HepG2 (cell line): ENCODE measurements at regions of chr1 and their contacts with region 1.

Region 1: DNA sequence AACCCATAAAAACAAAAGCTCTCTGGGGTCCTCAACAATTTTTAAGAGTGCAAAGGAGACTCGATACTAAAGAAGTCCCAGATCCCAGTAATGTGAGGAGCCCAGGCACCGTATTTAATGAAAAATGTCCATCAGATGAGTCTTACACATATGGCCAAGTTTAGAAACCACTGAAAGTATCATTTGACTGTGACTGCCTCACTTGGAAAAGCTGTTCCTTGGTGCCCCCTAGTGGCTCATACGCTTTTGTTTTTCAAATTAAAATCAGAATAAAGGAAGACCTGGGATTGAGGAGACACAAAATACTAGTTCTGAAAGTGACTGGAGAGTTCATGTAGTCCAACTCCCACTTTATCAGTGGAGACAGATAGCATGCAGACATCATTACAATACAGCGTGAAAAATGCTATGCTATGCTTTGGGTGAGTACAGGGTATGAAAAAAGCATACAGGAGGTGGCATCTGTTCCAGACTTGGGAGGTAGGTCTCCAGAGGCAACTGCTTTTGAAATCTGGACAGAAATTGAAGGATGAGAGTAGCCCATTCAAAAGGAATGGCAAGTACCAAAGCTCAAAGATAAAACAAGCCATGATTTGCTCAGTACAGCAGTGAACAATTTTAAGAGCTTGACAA is 33.8 kb downstream of the GDAP2 start:
- DNase-seq: peak; percentile 63
- ATAC-seq: peak; percentile 44; the same call in 2 of the 3 replicates
- H3K4me3 ChIP-seq: no peak overlapping the region
- H3K27ac ChIP-seq: no peak overlapping the region
- H3K4me1 ChIP-seq: no peaks in the 10 kb centered on the region
- H3K27me3 ChIP-seq: no peaks in the 10 kb centered on the region
- CTCF ChIP-seq: peak; percentile 81
- EP300 ChIP-seq: no peak
- POLR2A ChIP-seq: no peak
- RAD21 ChIP-seq: peak; percentile 51

Region 2: GRCh38 chr1:117512743-117513321 is 382.8 kb before region 1 on chr1:
- CTCF ChIA-PET with region 1: interaction called, 12 read pairs
- POLR2A ChIA-PET with region 1: no interaction called
- in situ Hi-C with region 1: no loop called
- intact Hi-C with region 1: loop called (anchors 1 kb)
- DNase-seq: no peak
- ATAC-seq: no peak
- H3K4me3 ChIP-seq: no peak overlapping the region
- H3K27ac ChIP-seq: no peak overlapping the region
- H3K4me1 ChIP-seq: no peaks in the 10 kb centered on the region
- H3K27me3 ChIP-seq: no peaks in the 10 kb centered on the region
- CTCF ChIP-seq: peak; percentile 52
- EP300 ChIP-seq: no peak
- POLR2A ChIP-seq: no peak
- RAD21 ChIP-seq: peak; percentile 28; the same call in 1 of the 2 replicates

Region 3: GRCh38 chr1:117534995-117535467 is 360.6 kb before region 1 on chr1:
- CTCF ChIA-PET with region 1: no interaction called
- POLR2A ChIA-PET with region 1: no interaction called
- in situ Hi-C with region 1: no loop called
- intact Hi-C with region 1: loop called (anchors 1 kb)
- DNase-seq: peak; percentile 31
- ATAC-seq: peak; percentile 89
- H3K4me3 ChIP-seq: no peak overlapping the region
- H3K27ac ChIP-seq: no peak overlapping the region
- H3K4me1 ChIP-seq: peaks cover 5% of the 10 kb centered on the region; the same call in 1 of the 2 replicates
- H3K27me3 ChIP-seq: no peaks in the 10 kb centered on the region
- CTCF ChIP-seq: peak; percentile 71
- EP300 ChIP-seq: no peak
- POLR2A ChIP-seq: no peak
- RAD21 ChIP-seq: no peak; the same call in 1 of the 2 replicates

Region 4: DNA sequence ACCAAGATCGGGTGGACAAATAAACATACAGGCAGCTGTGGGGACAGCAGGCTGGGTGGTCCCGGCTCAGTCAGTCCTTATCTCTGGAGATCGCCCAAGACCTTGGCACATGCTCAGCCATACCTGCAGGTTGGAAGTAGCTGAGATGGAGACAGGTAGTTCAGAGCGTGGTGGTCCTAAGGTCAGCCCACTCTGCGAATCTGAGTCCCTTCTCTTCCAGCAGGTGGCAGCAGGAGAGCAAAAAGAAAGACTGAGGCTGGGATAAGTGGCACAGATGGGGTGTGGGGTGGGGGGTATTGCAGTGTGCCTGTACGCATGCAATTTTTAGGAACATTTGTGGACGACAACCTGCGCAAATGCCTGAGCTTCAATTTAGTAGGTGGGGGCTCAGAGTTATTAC is 184.9 kb before region 1 on chr1:
- CTCF ChIA-PET with region 1: no interaction called
- POLR2A ChIA-PET with region 1: no interaction called
- in situ Hi-C with region 1: no loop called
- intact Hi-C with region 1: loop called (anchors 1 kb)
- DNase-seq: no peak
- ATAC-seq: peak; percentile 67
- H3K4me3 ChIP-seq: no peak overlapping the region
- H3K27ac ChIP-seq: no peak overlapping the region
- H3K4me1 ChIP-seq: no peaks in the 10 kb centered on the region
- H3K27me3 ChIP-seq: peaks cover 1 to 5% of the 10 kb centered on the region in 2 experiments; a peak in 1 of 5 replicates
- CTCF ChIP-seq: peak; percentile 65
- EP300 ChIP-seq: no peak
- POLR2A ChIP-seq: no peak
- RAD21 ChIP-seq: no peak

Region 5: DNA sequence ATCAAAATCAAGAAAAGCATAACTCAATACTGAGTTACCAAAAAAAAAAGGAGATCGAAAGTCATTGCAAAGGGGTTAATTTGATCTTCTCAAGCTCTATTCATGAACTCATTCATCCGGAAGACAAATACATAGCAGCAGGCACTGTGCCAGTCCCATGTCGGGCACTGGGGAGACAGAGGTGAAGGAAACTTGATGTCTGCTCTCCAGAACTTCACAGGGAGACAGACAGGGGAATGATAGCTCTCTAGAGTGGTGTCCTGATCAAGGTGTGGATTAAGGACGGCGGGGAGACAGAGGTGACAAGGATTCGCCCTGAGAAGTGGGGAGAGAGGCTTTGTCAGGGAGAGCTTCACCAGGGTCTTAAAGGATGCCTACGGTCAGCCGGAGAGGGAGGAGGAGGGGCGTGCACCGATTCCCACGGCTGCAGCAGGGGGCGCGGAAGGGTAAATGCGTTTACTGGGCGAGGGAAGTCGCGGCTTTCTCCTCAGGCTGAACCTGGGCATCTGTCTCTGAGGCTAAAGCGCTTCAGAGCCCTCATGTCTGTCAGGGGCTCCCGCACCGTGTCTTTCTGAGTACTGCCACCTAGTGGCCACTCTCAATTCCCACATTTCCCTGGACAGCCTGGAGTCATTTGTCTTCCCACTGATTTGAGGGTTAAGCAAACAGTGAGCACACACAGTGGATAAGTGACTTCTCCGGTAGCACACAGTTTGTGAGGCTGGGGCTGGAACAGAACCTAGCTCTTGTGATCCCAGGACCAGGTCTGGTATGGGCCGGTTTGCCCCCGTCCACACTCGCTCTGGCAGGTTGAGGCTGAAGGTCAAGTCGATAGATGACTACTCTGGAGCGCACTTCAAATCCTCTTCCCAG is 136.9 kb before region 1 on chr1:
- CTCF ChIA-PET with region 1: interaction called, 4 read pairs
- POLR2A ChIA-PET with region 1: no interaction called
- in situ Hi-C with region 1: no loop called
- intact Hi-C with region 1: loop called (anchors 2 kb)
- DNase-seq: peak; percentile 79
- ATAC-seq: peak; percentile 97
- H3K4me3 ChIP-seq: peak overlapping the region in 1 of 3 experiments; percentile 25; a peak in 2 of 6 replicates
- H3K27ac ChIP-seq: no peak overlapping the region
- H3K4me1 ChIP-seq: peaks cover 26% of the 10 kb centered on the region
- H3K27me3 ChIP-seq: peaks cover 5 to 18% of the 10 kb centered on the region in 2 experiments; a peak in 3 of 5 replicates
- CTCF ChIP-seq: peak; percentile 92
- EP300 ChIP-seq: no peak
- POLR2A ChIP-seq: no peak
- RAD21 ChIP-seq: peak; percentile 60

Region 6: DNA sequence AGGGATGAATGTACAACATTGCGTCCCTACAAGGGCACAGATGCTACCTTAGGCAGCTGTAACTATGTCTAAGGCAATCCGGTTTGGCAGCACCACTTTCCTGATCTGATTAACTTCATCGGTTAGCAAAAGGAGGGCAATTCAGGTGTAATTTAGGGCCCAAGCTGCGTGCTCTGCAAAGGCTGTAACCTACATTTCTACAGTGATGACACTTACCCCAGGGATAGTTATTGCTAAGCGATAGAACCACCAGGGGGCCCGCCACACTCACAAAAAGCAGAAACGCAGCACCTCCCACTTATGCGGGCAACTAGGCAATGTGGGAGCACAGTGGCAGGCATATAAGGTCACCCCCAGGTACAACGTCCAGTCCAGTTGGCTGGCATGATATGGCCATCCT is 79.7 kb before region 1 on chr1:
- CTCF ChIA-PET with region 1: interaction called, 38 read pairs
- POLR2A ChIA-PET with region 1: no interaction called
- in situ Hi-C with region 1: loop called (anchors 5 kb)
- intact Hi-C with region 1: loop called (anchors 1 kb)
- DNase-seq: peak; percentile 21
- ATAC-seq: peak; percentile 85
- H3K4me3 ChIP-seq: no peak overlapping the region; a peak in 1 of 6 replicates
- H3K27ac ChIP-seq: no peak overlapping the region
- H3K4me1 ChIP-seq: peaks cover 35% of the 10 kb centered on the region
- H3K27me3 ChIP-seq: no peaks in the 10 kb centered on the region
- CTCF ChIP-seq: peak; percentile 77
- EP300 ChIP-seq: no peak
- POLR2A ChIP-seq: no peak
- RAD21 ChIP-seq: peak; percentile 67

Region 7: DNA sequence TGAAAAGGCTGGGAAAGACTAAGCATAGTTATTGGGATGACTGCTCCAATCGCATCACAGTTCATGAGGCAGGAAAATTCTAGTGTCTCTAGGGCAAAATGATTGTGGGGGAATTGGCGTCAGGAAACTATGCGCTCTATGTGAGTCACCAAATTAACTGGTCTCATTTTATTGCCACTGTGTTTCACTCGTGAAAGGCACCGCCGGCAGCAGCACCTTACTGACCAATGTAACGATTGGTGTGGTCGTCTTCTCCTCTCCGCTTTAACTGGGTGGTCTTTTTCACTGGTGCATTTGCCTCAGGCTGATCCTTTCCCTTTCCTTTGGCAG is 205.9 kb after region 1 on chr1:
- CTCF ChIA-PET with region 1: no interaction called
- POLR2A ChIA-PET with region 1: no interaction called
- in situ Hi-C with region 1: no loop called
- intact Hi-C with region 1: no loop called
- DNase-seq: no peak
- ATAC-seq: no peak
- H3K4me3 ChIP-seq: no peak overlapping the region
- H3K27ac ChIP-seq: no peak overlapping the region
- H3K4me1 ChIP-seq: no peaks in the 10 kb centered on the region
- H3K27me3 ChIP-seq: no peaks in the 10 kb centered on the region
- CTCF ChIP-seq: no peak
- EP300 ChIP-seq: no peak
- POLR2A ChIP-seq: no peak
- RAD21 ChIP-seq: no peak